Naive thymus-derived CD4-positive, alpha-beta T cell (primary cell): ENCODE measurements at regions of chr12 and their contacts with region 1.

Region 1: DNA sequence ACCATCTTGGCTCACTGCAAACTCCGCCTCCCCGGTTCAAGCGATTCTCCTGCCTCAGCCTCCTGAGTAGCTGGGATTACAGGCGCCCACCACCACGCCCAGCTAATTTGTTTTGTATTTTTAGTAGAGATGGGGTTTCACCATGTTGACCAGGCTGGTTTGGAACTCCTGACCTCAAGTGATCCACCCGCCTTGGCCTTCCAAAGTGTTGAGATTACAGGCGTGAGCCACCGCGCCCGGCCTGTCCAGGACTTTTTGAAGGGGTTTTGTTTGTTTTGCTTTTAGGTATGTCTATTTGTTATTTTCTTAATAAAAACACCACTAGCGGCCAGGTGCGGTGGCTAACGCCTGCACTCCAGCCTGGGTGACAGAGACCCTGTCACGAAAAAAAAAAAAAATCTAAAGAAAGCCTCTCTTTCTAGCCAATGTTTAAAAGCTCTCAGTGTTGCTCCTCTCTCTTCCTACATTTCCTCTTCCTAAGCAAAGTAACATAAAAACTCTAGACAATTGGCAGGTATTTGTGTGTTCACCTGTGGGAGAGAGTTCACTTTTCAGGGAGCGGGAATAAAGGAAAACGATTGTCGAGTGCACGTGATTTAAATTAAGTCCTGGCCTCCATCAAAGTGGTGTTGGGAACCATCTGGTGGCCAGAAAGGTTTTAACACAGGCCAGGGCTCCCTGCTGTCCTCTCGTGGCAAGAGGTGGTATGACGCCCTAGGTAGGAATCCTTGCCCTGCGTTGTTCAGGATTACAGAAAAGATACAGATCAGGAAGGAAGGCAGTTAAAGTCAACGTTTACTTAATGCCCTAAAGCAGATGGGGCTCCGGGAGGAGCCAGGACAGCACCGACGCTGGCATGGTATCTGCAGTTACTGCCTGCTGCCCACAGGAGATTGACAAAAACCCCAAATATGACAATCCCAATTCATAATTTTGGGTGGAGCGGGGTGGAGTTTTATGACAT is 36.2 kb upstream of the ATP23 start:
- DNase-seq: peak; percentile 64 to 86 (median 76)
- ATAC-seq: peak; percentile 100
- H3K4me3 ChIP-seq: no peak overlapping the region
- H3K4me3 Mint-ChIP-seq: peak overlapping the region; percentile 31 to 73 (median 64)
- H3K27ac ChIP-seq: no peak overlapping the region
- H3K27ac Mint-ChIP-seq: peak overlapping the region in 5 of 9 donors; percentile 2 to 68 (median 51)
- H3K4me1 ChIP-seq: peaks cover 0 to under 1% of the 10 kb centered on the region in 2 donors
- H3K4me1 Mint-ChIP-seq: peaks cover 5 to 11% (median 6%) of the 10 kb centered on the region in 7 donors
- H3K27me3 ChIP-seq: no peaks in the 10 kb centered on the region
- H3K27me3 Mint-ChIP-seq: peaks cover 4 to 36% (median 17%) of the 10 kb centered on the region in 5 donors

Region 2: GRCh38 chr12:56728139-56728861 is 1176.8 kb before region 1 on chr12:
- CTCF ChIA-PET with region 1: no interaction called
- POLR2A ChIA-PET with region 1: no interaction called
- intact Hi-C with region 1: no loop called
- DNase-seq: no peak
- ATAC-seq: no peak
- H3K4me3 ChIP-seq: no peak overlapping the region
- H3K4me3 Mint-ChIP-seq: no peak overlapping the region
- H3K27ac ChIP-seq: no peak overlapping the region
- H3K27ac Mint-ChIP-seq: peak overlapping the region in 1 of 9 donors; percentile 19
- H3K4me1 ChIP-seq: peaks cover 10 to 12% of the 10 kb centered on the region in 2 donors
- H3K4me1 Mint-ChIP-seq: peaks cover 11 to 22% (median 18%) of the 10 kb centered on the region in 7 donors
- H3K27me3 ChIP-seq: no peaks in the 10 kb centered on the region
- H3K27me3 Mint-ChIP-seq: no peaks in the 10 kb centered on the region

Region 3: DNA sequence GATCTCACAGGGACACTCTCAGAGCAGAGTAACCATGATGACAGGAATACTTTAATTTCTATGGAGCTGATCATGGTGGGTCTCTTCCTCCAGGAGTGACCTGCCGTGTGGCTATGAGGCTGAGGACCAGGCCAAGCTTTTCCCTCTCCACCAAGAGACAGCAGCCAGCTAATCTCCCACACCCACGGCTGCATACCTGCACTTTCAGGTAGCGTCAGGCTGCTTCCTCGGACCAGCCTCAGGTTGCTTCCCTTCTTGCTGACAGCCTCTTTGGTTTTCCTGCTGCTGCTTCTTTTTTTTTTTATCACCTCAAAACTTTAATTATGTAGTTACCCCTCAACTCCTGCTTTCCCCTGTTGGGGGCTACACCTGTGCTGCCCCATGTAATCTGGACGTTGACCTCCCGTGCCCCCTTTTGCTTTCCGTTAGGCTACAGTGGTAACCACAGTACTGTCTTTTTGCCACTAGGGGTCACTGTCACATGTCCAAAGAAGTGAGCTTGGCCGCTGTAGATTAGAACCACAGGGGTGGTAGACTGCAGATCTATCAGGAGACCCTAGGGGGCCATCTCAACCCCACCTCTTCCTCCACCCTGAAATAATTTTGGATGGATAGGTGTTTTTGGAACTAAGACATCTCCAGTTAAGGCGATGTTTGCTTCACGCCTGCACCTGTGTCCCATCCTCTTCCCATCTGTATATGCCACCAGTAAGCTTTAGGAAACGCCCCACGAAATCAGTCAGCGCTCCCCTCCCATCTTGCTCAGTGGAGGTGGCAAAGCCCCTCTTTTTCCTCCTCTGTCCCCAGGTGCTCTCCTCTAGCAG is 321.9 kb before region 1 on chr12:
- CTCF ChIA-PET with region 1: no interaction called
- POLR2A ChIA-PET with region 1: no interaction called
- intact Hi-C with region 1: loop called in 1 of 2 experiments (anchors 1 kb)
- DNase-seq: peak; percentile 24 to 79 (median 71)
- ATAC-seq: peak; percentile 100
- H3K4me3 ChIP-seq: no peak overlapping the region
- H3K4me3 Mint-ChIP-seq: no peak overlapping the region
- H3K27ac ChIP-seq: no peak overlapping the region
- H3K27ac Mint-ChIP-seq: peak overlapping the region in 1 of 9 donors; percentile 78
- H3K4me1 ChIP-seq: no peaks in the 10 kb centered on the region
- H3K4me1 Mint-ChIP-seq: peaks cover 5 to 15% (median 6%) of the 10 kb centered on the region in 7 donors
- H3K27me3 ChIP-seq: no peaks in the 10 kb centered on the region
- H3K27me3 Mint-ChIP-seq: peaks cover 0 to 18% (median 14%) of the 10 kb centered on the region in 5 donors

Region 4: DNA sequence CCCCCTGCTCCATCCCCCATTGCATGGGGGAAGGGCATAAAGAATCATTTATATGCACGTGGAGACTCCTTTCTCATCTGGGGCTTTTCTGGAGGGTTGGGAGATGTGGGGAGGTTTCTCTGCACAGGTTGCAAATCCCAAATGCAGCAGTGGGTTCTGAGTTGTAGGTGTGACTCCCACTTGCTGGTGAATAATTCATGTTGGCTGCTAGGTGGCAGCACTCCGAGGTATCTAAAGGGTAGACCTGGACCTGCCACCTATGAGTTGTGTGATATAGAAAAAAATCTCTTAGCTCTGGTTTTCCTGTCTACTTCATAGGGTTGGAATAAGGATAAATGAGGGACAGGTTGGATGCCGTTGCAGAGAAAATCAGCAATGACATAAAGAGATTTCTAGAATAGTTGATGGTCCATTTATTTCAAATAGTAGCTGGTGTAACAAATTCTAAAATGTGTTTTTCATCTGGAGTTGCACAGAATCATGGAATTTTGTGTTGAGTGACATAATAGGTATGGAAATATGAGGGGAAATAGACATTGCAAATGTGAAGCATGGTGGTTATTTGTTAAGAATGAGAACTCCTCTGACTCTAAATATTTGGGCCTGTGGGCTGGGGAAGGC is 145.7 kb before region 1 on chr12:
- CTCF ChIA-PET with region 1: interaction called, 13 read pairs
- POLR2A ChIA-PET with region 1: no interaction called
- intact Hi-C with region 1: loop called (anchors 1 kb)
- DNase-seq: peak in 5 of 9 donors; percentile 47 to 57 (median 51)
- ATAC-seq: peak; percentile 28
- H3K4me3 ChIP-seq: no peak overlapping the region
- H3K4me3 Mint-ChIP-seq: peak overlapping the region in 1 of 10 donors; percentile 64
- H3K27ac ChIP-seq: no peak overlapping the region
- H3K27ac Mint-ChIP-seq: peak overlapping the region in 4 of 9 donors; percentile 16 to 64 (median 28)
- H3K4me1 ChIP-seq: peaks cover 16 to 24% of the 10 kb centered on the region in 2 donors
- H3K4me1 Mint-ChIP-seq: peaks cover 31 to 49% (median 42%) of the 10 kb centered on the region in 7 donors
- H3K27me3 ChIP-seq: peaks cover 0 to 3% of the 10 kb centered on the region in 2 donors
- H3K27me3 Mint-ChIP-seq: peaks cover 2 to 16% (median 9%) of the 10 kb centered on the region in 5 donors

Region 5: GRCh38 chr12:57782608-57783465 is 122.3 kb before region 1 on chr12 and contains the start of gene TSFM:
- CTCF ChIA-PET with region 1: interaction called, 7 read pairs
- POLR2A ChIA-PET with region 1: no interaction called
- intact Hi-C with region 1: loop called (anchors 1 kb)
- DNase-seq: peak; percentile 90 to 97 (median 95)
- ATAC-seq: peak; percentile 99
- H3K4me3 ChIP-seq: peak within 1 kb of the TSS; percentile 97
- H3K4me3 Mint-ChIP-seq: peak within 1 kb of the TSS; percentile 96 to 100 (median 99)
- H3K27ac ChIP-seq: peak within 1 kb of the TSS; percentile 85
- H3K27ac Mint-ChIP-seq: peak within 1 kb of the TSS; percentile 95 to 100 (median 99)
- H3K4me1 ChIP-seq: peaks cover 36 to 40% of the 10 kb centered on the region in 2 donors
- H3K4me1 Mint-ChIP-seq: peaks cover 23 to 65% (median 48%) of the 10 kb centered on the region in 7 donors
- H3K27me3 ChIP-seq: no peaks in the 10 kb centered on the region
- H3K27me3 Mint-ChIP-seq: no peaks in the 10 kb centered on the region
- total RNA-seq, gene TSFM: 17.8 to 34.9 (median 22.3) TPM

Region 6: GRCh38 chr12:57816855-57817151 is 88.3 kb before region 1 on chr12:
- CTCF ChIA-PET with region 1: interaction called, 11 read pairs
- POLR2A ChIA-PET with region 1: no interaction called
- intact Hi-C with region 1: no loop called
- DNase-seq: no peak
- ATAC-seq: peak; percentile 46
- H3K4me3 ChIP-seq: no peak overlapping the region
- H3K4me3 Mint-ChIP-seq: no peak overlapping the region
- H3K27ac ChIP-seq: no peak overlapping the region
- H3K27ac Mint-ChIP-seq: peak overlapping the region in 6 of 9 donors; percentile 12 to 56 (median 36)
- H3K4me1 ChIP-seq: no peaks in the 10 kb centered on the region
- H3K4me1 Mint-ChIP-seq: peaks cover 0 to 13% (median 7%) of the 10 kb centered on the region in 7 donors
- H3K27me3 ChIP-seq: no peaks in the 10 kb centered on the region
- H3K27me3 Mint-ChIP-seq: no peaks in the 10 kb centered on the region

Region 7: DNA sequence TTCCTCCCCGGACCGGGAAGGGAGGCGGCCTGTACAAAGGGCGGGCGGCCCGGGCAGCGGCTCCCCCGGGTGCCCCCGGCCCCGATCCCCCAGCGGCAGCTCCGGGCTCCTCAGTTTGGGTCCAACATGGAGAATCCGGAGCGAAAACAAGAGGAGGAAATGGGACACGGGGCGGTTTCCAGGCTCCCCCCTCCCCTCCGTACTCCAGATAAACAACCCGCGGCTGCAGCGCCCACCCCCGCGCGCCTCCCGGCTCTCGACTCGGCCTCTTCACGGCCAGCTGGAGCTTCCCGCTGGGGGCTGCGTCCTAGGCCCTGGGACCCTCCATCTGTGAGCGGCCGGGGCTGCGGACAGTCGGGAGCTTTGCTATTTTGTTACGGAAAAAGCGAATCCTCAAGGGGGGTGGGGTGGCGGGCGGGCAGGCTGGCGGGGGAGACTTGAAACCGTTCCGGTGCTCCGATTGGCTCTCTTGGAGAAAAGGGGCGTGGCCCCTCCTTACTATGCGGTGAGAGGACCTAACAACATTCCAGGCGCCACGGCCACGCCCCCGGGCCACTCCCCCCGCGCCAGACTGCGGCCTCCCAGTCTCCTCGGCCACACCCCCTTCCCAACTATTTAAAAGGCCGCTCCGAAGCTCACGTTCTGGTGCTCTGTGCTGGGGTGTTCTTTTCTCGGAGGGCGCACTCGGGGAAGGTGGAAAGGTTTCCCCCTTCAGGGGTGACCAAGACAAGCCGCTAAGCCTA is 58.4 kb before region 1 on chr12 and contains the start of gene CTDSP2:
- CTCF ChIA-PET with region 1: interaction called, 7 read pairs
- POLR2A ChIA-PET with region 1: interaction called, 6 read pairs
- intact Hi-C with region 1: loop called in 1 of 2 experiments (anchors 1 kb)
- DNase-seq: peak; percentile 59 to 92 (median 82)
- ATAC-seq: peak; percentile 85
- H3K4me3 ChIP-seq: peak within 1 kb of the TSS; percentile 79
- H3K4me3 Mint-ChIP-seq: peak within 1 kb of the TSS; percentile 87 to 97 (median 92)
- H3K27ac ChIP-seq: peak within 1 kb of the TSS; percentile 89
- H3K27ac Mint-ChIP-seq: peak within 1 kb of the TSS; percentile 75 to 94 (median 89)
- H3K4me1 ChIP-seq: peaks cover 15 to 30% of the 10 kb centered on the region in 2 donors
- H3K4me1 Mint-ChIP-seq: peaks cover 48 to 57% (median 50%) of the 10 kb centered on the region in 7 donors
- H3K27me3 ChIP-seq: no peaks in the 10 kb centered on the region
- H3K27me3 Mint-ChIP-seq: peaks cover 0 to 39% (median 9%) of the 10 kb centered on the region in 5 donors
- total RNA-seq, gene CTDSP2: 124 to 295 (median 145) TPM